ENCODE measurements at regions of chr14 and their contacts with region 1.

Region 1: DNA sequence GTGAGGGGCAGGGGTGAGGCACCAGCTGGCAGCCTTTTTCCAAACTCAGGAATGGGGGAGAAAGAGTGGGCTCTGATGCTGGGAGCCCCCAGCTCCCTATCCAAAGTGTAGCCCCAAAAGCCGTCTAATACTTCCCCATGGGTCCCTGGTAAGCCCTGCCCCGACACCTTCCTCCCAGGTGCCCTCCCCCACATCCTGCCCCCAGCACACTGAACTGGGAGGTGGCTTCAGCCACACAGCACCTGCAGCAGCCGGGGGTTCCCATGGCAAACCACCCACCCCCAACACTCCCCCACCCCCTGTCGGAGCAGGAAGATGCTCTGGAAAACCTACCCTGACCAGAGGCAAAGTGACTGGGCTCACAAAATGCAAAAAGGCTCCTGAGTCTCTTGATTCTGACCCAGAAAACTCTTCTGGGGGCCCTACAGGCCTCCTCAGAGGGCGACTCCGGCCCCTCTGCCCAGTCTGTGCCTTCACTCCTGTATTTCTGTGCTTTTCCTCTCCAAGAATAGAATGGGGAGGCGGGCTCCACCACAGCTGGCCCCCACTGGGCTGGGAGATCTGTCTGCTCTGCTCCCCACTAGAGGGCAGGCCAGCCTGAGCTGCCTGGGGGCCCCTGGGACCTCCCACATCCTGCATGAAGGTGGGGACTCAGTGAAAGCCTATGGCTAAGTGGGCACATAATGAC is 81.6 kb downstream of the ITPK1 start:
- H3K4me3 Mint-ChIP-seq: no peak overlapping the region
- H3K27ac Mint-ChIP-seq: peak overlapping the region; percentile 85
- H3K4me1 Mint-ChIP-seq: peaks cover 92% of the 10 kb centered on the region
- H3K27me3 Mint-ChIP-seq: no peaks in the 10 kb centered on the region

Region 2: DNA sequence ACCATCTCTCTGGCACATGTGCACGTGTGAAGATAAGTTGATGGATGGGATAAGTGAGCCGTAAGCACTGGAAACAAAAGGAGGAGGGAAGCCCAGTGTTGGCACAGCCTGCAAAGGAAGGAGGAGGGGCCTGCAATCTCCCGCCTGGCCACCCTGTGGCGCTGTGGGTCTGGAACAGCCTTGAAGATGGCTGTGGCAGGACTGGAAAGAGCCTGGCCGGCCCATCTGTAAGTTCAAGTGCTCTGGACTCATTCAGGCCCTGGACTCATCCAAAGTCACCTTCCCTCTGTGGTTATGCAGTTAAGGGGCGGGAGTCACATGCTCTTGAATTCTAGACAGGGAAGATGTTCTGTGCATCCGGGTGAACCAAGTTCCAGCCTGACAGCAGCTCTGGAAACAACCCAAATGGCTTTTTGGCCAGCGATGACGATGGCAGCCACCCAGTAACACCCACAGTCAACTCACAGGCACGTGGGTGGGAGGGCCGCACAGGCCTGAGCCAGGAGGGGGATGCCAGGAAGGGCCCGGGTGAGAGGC is 60.8 kb before region 1 on chr14:
- intact Hi-C with region 1: loop called (anchors 10 kb)
- H3K4me3 Mint-ChIP-seq: no peak overlapping the region
- H3K27ac Mint-ChIP-seq: peak overlapping the region; percentile 68
- H3K4me1 Mint-ChIP-seq: peaks cover 89% of the 10 kb centered on the region
- H3K27me3 Mint-ChIP-seq: no peaks in the 10 kb centered on the region

Region 3: DNA sequence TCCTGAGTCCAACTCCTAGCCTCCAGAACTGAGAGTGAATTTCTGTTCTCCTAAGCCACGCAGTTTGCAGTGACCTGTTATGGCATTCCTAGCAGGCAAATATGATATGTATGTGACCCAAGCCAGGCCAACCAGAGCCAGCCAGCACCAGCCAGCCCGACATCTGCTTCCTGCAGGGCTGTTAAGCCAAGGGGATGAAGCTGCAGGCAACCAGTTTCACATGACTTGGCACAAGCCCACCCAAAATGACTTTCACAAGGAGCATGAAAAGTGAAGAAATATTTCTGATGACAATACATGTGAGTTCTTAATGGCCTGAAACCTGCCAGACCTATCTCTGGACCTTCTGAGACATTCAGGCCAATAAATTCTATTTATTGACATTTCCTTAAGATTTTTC is 13.5 kb after region 1 on chr14:
- intact Hi-C with region 1: loop called (anchors 1 kb)
- H3K4me3 Mint-ChIP-seq: no peak overlapping the region
- H3K27ac Mint-ChIP-seq: peak overlapping the region; percentile 71
- H3K4me1 Mint-ChIP-seq: peaks cover 86% of the 10 kb centered on the region
- H3K27me3 Mint-ChIP-seq: no peaks in the 10 kb centered on the region

Region 4: GRCh38 chr14:93073910-93074769 is 40.0 kb after region 1 on chr14:
- intact Hi-C with region 1: loop called (anchors 5 kb)
- H3K4me3 Mint-ChIP-seq: peak overlapping the region; percentile 76
- H3K27ac Mint-ChIP-seq: peak overlapping the region; percentile 92
- H3K4me1 Mint-ChIP-seq: peaks cover 89% of the 10 kb centered on the region
- H3K27me3 Mint-ChIP-seq: no peaks in the 10 kb centered on the region

Region 5: GRCh38 chr14:93105362-93105761 is 71.2 kb after region 1 on chr14:
- intact Hi-C with region 1: loop called (anchors 5 kb)
- H3K4me3 Mint-ChIP-seq: peak overlapping the region; percentile 42
- H3K27ac Mint-ChIP-seq: peak overlapping the region; percentile 67
- H3K4me1 Mint-ChIP-seq: peaks cover 97% of the 10 kb centered on the region
- H3K27me3 Mint-ChIP-seq: no peaks in the 10 kb centered on the region

Region 6: DNA sequence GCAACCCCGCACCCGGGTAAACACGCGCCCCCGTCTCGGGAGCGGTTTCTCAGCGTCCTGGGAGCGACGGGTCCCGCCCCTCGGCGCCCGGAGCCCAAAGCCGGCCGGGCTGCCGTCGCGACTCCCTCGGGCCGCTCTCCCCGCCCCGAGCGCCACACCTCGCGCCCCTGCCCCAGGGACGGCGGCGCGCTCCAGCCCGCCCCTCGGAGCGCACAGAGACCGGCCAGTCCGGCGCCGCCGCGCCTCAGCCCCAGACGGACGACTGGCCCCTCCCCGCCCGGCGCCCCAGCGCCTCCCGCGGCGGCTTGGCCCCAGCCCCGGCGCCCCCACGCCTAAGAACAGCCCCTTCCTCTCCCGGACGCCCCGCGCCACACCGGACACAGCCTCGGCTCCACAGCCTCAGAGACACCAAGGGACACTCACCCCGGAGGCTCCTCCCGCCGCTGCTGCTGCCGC is 298.3 kb after region 1 on chr14:
- intact Hi-C with region 1: no loop called
- H3K4me3 Mint-ChIP-seq: peak overlapping the region; percentile 85
- H3K27ac Mint-ChIP-seq: peak overlapping the region; percentile 93
- H3K4me1 Mint-ChIP-seq: peaks cover 47% of the 10 kb centered on the region
- H3K27me3 Mint-ChIP-seq: no peaks in the 10 kb centered on the region